Heart left ventricle (tissue), 16 donors: ENCODE measurements at regions of chr16 and their contacts with region 1.

Region 1: DNA sequence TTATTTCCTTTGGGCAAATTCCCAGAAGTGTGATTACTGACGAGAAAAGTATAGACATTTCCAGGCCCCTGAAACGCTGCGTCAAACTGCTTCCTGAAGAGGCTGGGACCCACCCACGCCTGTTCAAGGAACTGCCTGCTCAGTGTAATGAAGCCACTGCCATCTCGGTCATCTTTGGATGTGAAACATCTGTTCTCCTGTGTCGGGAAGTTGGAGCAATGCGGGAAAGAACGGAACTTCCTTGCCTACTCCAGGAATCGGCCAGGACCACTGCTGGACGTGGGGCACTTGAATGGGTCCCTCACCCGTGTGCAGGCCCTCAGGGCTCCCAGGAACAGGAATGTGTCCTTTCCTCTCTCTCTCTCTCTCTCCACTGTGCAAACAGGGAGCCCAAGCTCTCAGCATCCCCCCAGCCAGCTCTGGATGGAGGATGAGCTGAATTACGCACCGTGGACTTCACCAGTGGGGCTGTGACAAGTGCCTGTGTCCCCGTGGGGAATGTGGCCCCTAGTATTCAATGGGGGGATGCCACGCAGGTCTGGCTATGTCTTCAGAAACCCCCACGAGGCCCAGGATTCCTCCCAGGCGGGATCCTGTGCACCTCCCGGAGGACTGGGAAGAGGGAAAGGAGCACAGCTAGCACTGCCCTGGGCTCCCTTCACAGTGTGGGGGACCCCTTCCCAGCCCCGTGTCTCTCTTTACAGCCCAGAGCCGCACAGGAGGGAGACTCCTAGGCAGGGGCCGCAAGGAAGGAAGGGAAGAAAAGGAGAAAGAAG is 18.3 kb upstream of the LITAF start:
- DNase-seq: peak in 4 of 5 donors; percentile 77 to 87 (median 80)
- ATAC-seq: peak; percentile 81 to 97 (median 93)
- H3K4me3 ChIP-seq: no peak overlapping the region
- H3K27ac ChIP-seq: peak overlapping the region in 10 of 12 donors; percentile 45 to 87 (median 62)
- H3K4me1 ChIP-seq: peaks cover 0 to 39% (median 1%) of the 10 kb centered on the region in 12 donors
- H3K27me3 ChIP-seq: no peaks in the 10 kb centered on the region
- CTCF ChIP-seq: no peak
- POLR2A ChIP-seq: no peak

Region 2: GRCh38 chr16:11546608-11547061 is 58.3 kb before region 1 on chr16:
- intact Hi-C with region 1: no loop called
- DNase-seq: no peak
- ATAC-seq: no peak
- H3K4me3 ChIP-seq: no peak overlapping the region
- H3K27ac ChIP-seq: peak overlapping the region in 1 of 12 donors; percentile 49
- H3K4me1 ChIP-seq: peaks cover 0 to 9% (median 0%) of the 10 kb centered on the region in 12 donors
- H3K27me3 ChIP-seq: no peaks in the 10 kb centered on the region
- CTCF ChIP-seq: no peak
- POLR2A ChIP-seq: no peak

Region 3: DNA sequence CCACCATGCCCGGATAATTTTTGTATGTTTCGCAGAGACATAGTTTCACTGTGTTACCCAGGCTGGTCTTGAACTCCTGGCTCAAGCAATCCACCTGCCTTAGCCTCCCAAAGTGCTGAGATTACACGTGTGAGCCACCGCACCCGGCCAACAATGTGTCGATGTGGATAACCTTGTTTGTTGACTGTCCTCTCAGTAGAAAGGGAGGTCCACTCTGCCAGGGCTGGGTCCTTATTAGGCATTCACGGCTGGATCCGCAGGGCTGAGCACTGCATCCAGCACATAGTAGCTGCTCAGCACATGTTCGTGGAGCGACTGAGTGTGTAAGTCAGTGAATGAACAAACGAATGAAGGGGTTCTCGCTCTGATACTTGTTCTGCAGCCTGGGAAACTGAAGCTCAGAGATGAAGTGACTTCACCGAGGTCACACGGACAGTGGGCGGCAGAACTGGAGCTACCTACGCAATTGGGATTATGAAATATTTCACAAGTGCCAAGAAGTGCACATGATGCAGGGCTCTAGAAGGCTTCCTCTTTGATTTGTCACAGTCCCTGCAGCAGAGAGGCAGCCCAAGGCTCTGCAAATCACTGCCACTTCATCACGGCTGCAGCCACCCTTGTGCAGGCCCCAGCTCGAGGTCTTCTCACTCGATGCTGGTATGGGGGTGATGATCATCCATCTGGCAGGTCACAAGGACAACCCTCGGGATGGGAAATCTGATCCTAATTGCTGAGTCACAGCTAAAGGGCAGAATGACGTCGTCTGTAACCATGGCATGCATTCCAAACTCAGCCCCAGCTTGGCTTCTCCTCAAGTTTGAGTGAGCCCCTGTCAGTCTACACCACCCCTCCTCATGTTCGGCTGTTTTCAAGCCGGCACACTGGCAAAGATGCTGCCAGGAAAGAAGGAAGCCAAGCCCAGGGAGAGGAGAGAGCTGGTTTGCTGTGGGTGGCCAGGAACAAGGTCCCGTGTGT is 35.2 kb after region 1 on chr16:
- intact Hi-C with region 1: no loop called
- DNase-seq: peak; percentile 80 to 94 (median 85)
- ATAC-seq: peak; percentile 91 to 96 (median 94)
- H3K4me3 ChIP-seq: no peak overlapping the region
- H3K27ac ChIP-seq: peak overlapping the region; percentile 69 to 95 (median 88)
- H3K4me1 ChIP-seq: peaks cover 0 to 22% (median 14%) of the 10 kb centered on the region in 12 donors
- H3K27me3 ChIP-seq: no peaks in the 10 kb centered on the region
- CTCF ChIP-seq: no peak
- POLR2A ChIP-seq: peak in 1 of 2 donors; percentile 36

Region 4: GRCh38 chr16:11651796-11652195 is 46.8 kb after region 1 on chr16:
- intact Hi-C with region 1: loop called in 1 of 10 experiments (anchors 5 kb)
- DNase-seq: no peak
- ATAC-seq: no peak
- H3K4me3 ChIP-seq: no peak overlapping the region
- H3K27ac ChIP-seq: no peak overlapping the region
- H3K4me1 ChIP-seq: no peaks in the 10 kb centered on the region
- H3K27me3 ChIP-seq: no peaks in the 10 kb centered on the region
- CTCF ChIP-seq: no peak
- POLR2A ChIP-seq: no peak